Activated CD8-positive, alpha-beta T cell treated with anti-CD3 and anti-CD28 coated beads, Interleukin-2, amount 10 ng/mL, durations not matched to agents 7 days and 5 days (primary cell): ENCODE measurements at regions of chr16 and their contacts with region 1.

Region 1: DNA sequence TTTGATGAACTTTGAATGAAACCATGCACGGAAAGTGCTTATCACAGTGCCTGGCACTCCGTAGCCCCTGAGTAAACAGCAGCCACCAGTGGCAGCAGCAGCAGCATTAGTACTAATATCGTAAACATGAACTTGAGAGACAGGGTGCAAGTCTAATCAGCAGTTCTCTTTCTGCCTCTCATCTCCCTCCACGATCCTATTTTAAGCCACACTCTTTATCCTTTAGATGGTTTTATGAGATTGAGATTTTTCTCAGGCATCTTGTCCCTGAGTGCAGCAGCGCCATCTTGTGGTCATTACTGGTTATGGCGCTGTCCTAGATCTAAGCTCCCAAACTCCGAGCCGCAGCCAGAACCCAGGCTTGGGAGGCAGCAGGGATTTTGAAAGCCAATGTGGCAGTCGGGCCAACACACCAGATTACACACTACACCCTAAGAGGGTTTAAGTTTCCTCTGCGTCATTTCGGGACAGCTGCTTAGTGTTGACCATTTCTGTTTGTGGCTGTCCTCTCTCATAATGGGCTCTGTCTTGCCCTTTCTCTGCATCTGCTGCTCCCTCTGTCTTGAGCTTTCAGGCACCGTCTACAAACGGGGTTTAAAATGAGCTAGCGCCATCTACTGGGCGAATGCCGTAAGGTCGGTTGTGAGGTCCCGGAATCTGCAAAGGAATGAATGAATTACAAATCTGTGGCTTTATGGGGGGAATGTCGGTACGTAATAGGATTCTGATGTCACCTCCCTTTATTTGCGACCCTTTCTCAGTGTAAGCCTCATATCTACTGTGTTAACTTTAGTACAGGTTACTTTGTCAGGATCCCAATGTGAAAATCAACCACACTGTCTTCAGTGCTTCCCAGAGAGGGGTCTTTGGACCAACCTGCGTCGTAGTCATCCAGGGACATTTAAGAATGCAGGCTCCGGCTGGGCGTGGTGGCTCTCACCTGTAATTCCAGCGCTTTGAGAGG is 64.5 kb downstream of the CYLD start:
- DNase-seq: peak; percentile 90
- ATAC-seq: peak; percentile 98
- H3K4me3 Mint-ChIP-seq: peak overlapping the region; percentile 72
- H3K27ac Mint-ChIP-seq: peak overlapping the region; percentile 62
- H3K4me1 Mint-ChIP-seq: peaks cover 18% of the 10 kb centered on the region
- H3K27me3 Mint-ChIP-seq: no peaks in the 10 kb centered on the region

Region 2: GRCh38 chr16:50024684-50025536 is 781.5 kb before region 1 on chr16 and contains the start of gene CNEP1R1:
- CTCF ChIA-PET with region 1: interaction called, 23 read pairs
- POLR2A ChIA-PET with region 1: no interaction called
- DNase-seq: peak; percentile 95
- ATAC-seq: peak; percentile 99
- H3K4me3 Mint-ChIP-seq: peak within 1 kb of the TSS; percentile 94
- H3K27ac Mint-ChIP-seq: peak within 1 kb of the TSS; percentile 92
- H3K4me1 Mint-ChIP-seq: peaks cover 14% of the 10 kb centered on the region
- H3K27me3 Mint-ChIP-seq: peaks cover 4% of the 10 kb centered on the region
- total RNA-seq, gene CNEP1R1: 25.1 to 26.9 TPM

Region 3: DNA sequence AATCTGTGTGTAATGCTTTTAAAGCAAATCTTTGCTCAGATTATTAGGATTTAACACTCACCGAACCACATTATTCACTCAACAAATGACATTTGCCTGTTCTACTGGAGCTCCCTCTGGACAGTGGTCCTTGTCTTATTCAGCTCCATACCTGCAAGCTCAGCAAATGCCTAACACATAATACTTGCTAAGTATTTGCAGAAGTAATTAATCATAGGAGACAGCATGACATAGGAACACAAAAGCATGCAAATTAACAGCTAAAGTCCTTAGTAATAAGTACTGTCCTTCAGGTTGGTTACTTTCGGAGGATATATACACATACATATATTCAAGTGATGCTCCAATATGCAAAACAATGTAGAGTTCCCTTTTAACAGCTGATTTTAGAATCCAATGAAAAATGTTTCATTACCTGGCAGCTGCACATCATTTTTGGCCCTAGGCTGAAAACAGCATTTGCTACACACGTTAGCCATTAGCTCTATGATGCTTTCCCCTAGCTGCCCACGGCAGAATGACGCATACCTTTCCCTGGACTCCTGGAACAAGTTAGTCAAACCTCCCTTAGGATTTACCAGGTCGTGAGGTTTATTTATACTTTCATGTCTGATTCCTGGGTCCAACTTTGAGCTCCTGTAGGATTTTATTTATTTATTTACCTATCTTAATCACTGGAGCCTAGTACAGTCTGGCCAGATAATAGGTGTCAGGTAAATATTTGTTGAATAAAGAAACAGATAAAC is 446.2 kb before region 1 on chr16:
- CTCF ChIA-PET with region 1: interaction called, 37 read pairs
- POLR2A ChIA-PET with region 1: no interaction called
- DNase-seq: no peak
- ATAC-seq: no peak
- H3K4me3 Mint-ChIP-seq: no peak overlapping the region
- H3K27ac Mint-ChIP-seq: peak overlapping the region; percentile 9
- H3K4me1 Mint-ChIP-seq: peaks cover 41% of the 10 kb centered on the region
- H3K27me3 Mint-ChIP-seq: no peaks in the 10 kb centered on the region

Region 4: DNA sequence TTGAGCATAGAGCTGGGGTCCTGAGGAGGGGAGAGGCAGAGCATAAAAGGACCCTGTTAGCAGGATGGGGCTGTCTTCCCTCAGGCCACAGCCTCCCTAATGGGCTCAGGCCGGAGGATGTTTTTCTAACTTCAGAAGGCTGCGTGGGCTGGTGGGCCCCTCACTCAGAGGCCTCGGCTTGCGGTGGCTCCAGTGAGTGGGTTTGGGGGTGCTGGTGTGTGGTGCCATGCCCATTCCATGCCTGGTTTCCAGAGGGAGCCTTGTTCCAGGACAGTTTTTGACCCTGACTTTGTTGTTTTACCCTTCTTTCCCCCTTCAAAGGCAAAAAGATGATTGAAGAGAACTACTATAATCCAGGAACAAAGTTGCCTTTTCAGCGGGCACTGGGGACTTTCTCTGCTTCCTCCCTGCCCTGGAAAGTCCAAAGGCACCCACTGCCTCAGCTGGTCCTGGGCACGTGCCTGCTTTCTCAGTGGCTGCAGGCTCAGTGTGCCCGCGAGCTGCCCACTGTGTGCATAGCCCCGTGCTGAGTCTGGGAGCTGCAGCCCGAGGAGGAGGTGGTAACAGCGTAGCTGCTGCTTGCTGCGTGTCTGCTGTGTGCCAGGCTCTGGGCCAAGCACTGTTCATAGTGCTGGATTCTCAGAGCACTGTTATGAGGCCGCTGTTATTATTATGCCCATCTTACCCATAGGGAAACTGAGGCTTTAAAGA is 246.4 kb before region 1 on chr16:
- CTCF ChIA-PET with region 1: no interaction called
- POLR2A ChIA-PET with region 1: no interaction called
- DNase-seq: no peak
- ATAC-seq: no peak
- H3K4me3 Mint-ChIP-seq: no peak overlapping the region
- H3K27ac Mint-ChIP-seq: no peak overlapping the region
- H3K4me1 Mint-ChIP-seq: peaks cover 2% of the 10 kb centered on the region
- H3K27me3 Mint-ChIP-seq: no peaks in the 10 kb centered on the region

Region 5: GRCh38 chr16:50616883-50617645 is 189.3 kb before region 1 on chr16:
- CTCF ChIA-PET with region 1: interaction called, 13 read pairs
- POLR2A ChIA-PET with region 1: no interaction called
- DNase-seq: no peak
- ATAC-seq: no peak
- H3K4me3 Mint-ChIP-seq: no peak overlapping the region
- H3K27ac Mint-ChIP-seq: no peak overlapping the region
- H3K4me1 Mint-ChIP-seq: no peaks in the 10 kb centered on the region
- H3K27me3 Mint-ChIP-seq: no peaks in the 10 kb centered on the region

Region 6: DNA sequence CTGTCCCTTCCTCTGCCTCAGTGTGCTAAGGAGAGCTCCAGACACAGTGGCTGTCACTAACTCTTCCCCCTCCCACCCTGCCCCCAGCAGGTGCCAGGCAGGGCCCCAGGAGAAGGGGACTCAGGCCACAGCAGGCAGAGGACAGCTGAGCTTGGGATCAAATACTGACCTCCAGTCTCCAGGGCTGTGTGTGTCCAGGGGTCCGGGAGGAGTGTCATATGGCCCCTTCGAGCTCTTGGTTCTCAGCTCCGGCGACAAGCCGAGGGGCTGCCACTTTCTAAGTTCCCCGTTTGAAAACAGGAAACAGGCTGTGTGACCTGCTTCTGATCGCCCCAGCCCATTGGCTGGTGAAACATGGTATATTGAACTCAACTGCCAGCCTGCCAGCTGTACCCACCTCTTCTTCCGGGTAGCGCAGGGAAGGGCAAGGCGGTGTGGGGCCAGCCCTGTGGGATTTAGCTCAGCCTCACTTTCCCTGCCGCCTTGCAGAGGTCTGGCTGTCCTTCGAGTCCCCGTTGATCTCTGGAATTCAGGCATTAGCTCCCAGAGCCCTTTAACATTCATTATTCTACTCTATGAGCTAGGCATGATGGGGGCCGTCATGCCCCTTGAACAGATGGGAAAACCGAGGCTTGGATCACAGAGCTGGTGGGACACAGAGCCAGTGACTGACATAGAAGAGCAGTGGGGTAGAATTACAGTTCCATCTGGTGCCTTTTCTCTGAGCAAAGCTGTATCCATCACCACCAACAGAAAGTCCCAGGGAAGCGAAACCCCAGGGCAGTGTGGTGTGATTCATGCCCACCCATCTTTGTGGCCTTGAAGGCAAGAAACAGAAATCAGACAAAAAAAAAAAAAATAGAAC is 125.1 kb before region 1 on chr16 and contains the start of gene SNX20:
- CTCF ChIA-PET with region 1: interaction called, 13 read pairs
- POLR2A ChIA-PET with region 1: no interaction called
- DNase-seq: peak; percentile 77
- ATAC-seq: peak; percentile 81
- H3K4me3 Mint-ChIP-seq: peak within 1 kb of the TSS; percentile 82
- H3K27ac Mint-ChIP-seq: peak within 1 kb of the TSS; percentile 89
- H3K4me1 Mint-ChIP-seq: peaks cover 84% of the 10 kb centered on the region
- H3K27me3 Mint-ChIP-seq: no peaks in the 10 kb centered on the region
- total RNA-seq, gene SNX20: 64.8 to 65.3 TPM

Region 7: DNA sequence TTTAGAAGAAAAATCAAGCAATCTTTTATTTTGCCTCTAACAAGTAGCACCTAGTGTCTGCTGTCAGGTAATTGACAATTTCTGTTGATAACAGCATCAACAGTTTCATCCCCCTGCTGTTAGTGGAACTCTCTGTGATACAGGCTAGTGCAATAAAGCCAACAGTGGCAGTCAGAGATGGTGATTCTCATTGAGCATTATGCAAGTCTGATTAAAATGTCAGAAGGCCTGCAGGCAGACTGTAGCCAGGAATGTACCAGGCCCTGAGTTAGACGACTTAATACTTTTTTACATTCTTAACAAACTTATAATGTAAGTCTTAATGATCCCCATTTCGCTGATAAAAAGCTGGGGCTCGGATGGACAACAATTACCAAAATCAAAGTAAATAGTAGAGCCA is 49.9 kb before region 1 on chr16:
- CTCF ChIA-PET with region 1: interaction called, 24 read pairs
- POLR2A ChIA-PET with region 1: no interaction called
- DNase-seq: no peak
- ATAC-seq: no peak
- H3K4me3 Mint-ChIP-seq: no peak overlapping the region
- H3K27ac Mint-ChIP-seq: no peak overlapping the region
- H3K4me1 Mint-ChIP-seq: peaks cover 48% of the 10 kb centered on the region
- H3K27me3 Mint-ChIP-seq: no peaks in the 10 kb centered on the region

Region 8: GRCh38 chr16:50791522-50791921 is 14.9 kb before region 1 on chr16:
- CTCF ChIA-PET with region 1: interaction called, 85 read pairs
- POLR2A ChIA-PET with region 1: interaction called, 4 read pairs
- DNase-seq: no peak
- ATAC-seq: no peak
- H3K4me3 Mint-ChIP-seq: no peak overlapping the region
- H3K27ac Mint-ChIP-seq: no peak overlapping the region
- H3K4me1 Mint-ChIP-seq: peaks cover 2% of the 10 kb centered on the region
- H3K27me3 Mint-ChIP-seq: no peaks in the 10 kb centered on the region